Activated CD4-positive, alpha-beta T cell treated with anti-CD3 and anti-CD28 coated beads for 36 hours (primary cell): ENCODE measurements at regions of chr3 and their contacts with region 1.

Region 1: DNA sequence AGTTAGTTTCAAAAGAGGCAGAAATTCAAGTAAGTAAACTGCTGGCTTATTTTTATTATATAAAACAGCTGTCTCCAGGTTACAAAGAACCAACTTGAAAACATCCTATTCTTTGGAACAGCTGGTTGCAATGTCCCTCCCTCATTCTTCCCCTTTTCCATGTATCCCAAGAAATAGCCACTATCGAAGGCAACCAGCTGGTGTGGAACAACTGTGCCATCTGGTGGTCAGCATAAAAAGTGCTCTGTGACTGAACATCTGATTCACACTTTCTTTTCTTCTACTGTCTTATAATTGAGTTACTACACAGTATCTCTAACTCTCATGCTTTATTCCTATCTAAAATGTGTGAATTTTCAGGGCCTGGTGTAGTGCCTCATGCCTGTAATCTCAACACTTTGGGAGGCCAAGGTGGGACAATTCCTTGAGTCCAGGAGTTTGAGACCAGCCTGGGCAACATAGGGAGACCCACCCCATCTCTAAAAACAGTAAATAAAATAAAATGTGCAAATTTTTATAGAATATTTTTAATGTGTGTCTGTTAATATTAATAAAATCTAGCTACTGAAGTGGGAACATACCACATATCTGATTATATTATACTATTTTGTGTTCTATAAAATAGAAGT is 9.6 kb downstream of the OSBPL11 start:
- DNase-seq: peak; percentile 70
- ATAC-seq: peak; percentile 54
- H3K4me3 Mint-ChIP-seq: no peak overlapping the region
- H3K27ac Mint-ChIP-seq: no peak overlapping the region
- H3K4me1 Mint-ChIP-seq: peaks cover 18% of the 10 kb centered on the region
- H3K27me3 Mint-ChIP-seq: no peaks in the 10 kb centered on the region

Region 2: GRCh38 chr3:124761250-124761796 is 824.4 kb before region 1 on chr3:
- CTCF ChIA-PET with region 1: interaction called, 12 read pairs
- POLR2A ChIA-PET with region 1: no interaction called
- intact Hi-C with region 1: loop called in 1 of 2 experiments (anchors 5 kb)
- DNase-seq: peak; percentile 88
- ATAC-seq: peak; percentile 90
- H3K4me3 Mint-ChIP-seq: peak overlapping the region; percentile 29
- H3K27ac Mint-ChIP-seq: no peak overlapping the region
- H3K4me1 Mint-ChIP-seq: peaks cover 9% of the 10 kb centered on the region
- H3K27me3 Mint-ChIP-seq: no peaks in the 10 kb centered on the region

Region 3: DNA sequence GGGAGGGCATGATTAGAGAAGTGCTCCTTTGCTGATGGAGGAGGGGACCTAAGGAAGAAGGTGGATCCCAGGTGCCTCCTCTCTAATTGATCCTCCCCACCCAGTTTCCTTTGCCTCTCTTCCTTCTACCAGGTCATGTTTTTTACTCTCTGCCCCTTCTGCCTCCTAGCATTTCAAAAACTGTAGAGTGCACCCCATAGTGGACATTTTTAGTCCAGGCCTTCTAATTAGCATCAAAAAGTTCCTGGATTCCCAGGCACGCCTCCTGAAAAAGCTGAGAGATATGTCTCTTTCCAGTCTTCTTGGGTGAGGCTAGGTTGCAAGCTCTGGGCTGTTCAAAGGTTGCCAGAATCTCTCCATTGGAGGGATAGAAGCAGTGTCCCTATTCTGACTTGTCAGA is 679.9 kb before region 1 on chr3:
- CTCF ChIA-PET with region 1: no interaction called
- POLR2A ChIA-PET with region 1: no interaction called
- intact Hi-C with region 1: no loop called
- DNase-seq: no peak
- ATAC-seq: no peak
- H3K4me3 Mint-ChIP-seq: no peak overlapping the region
- H3K27ac Mint-ChIP-seq: no peak overlapping the region
- H3K4me1 Mint-ChIP-seq: peaks cover 2% of the 10 kb centered on the region
- H3K27me3 Mint-ChIP-seq: peaks cover 2% of the 10 kb centered on the region

Region 4: DNA sequence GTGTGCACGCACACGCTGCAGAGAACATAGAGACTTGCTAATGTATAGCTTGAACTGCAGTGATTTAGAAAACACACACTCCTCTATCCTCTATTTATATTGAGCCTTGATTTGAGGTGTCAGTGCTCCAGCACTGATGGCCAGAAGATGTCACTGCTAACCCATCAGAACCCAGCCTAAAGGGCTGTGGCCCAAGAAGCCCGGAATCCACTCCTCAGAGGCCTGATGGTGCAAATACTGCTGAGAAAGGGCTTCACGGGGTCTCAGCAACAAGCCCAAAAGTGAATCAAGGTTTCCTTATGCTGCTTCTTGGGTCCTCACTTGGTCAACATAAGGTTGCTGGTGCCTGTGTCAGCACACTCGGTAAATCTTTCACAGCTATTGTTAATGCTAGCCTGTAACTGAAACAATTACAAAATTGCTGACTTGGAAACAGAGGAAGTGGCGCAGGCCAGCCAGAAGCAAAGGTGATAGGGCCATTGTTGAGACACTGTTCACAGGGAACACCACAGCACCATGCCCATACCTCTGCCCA is 590.2 kb before region 1 on chr3:
- CTCF ChIA-PET with region 1: interaction called, 4 read pairs
- POLR2A ChIA-PET with region 1: no interaction called
- intact Hi-C with region 1: loop called (anchors 1 to 10 kb)
- DNase-seq: peak; percentile 63
- ATAC-seq: peak; percentile 92
- H3K4me3 Mint-ChIP-seq: no peak overlapping the region
- H3K27ac Mint-ChIP-seq: no peak overlapping the region
- H3K4me1 Mint-ChIP-seq: no peaks in the 10 kb centered on the region
- H3K27me3 Mint-ChIP-seq: no peaks in the 10 kb centered on the region

Region 5: GRCh38 chr3:125212509-125213244 is 373.0 kb before region 1 on chr3 and contains the start of gene SLC12A8:
- CTCF ChIA-PET with region 1: no interaction called
- POLR2A ChIA-PET with region 1: no interaction called
- intact Hi-C with region 1: loop called in 1 of 2 experiments (anchors 5 kb)
- DNase-seq: no peak
- ATAC-seq: no peak
- H3K4me3 Mint-ChIP-seq: peak within 1 kb of the TSS; percentile 13
- H3K27ac Mint-ChIP-seq: no peak within 1 kb of the TSS
- H3K4me1 Mint-ChIP-seq: peaks cover 9% of the 10 kb centered on the region
- H3K27me3 Mint-ChIP-seq: peaks cover 49% of the 10 kb centered on the region
- total RNA-seq, gene SLC12A8: 0.26 to 0.39 TPM

Region 6: DNA sequence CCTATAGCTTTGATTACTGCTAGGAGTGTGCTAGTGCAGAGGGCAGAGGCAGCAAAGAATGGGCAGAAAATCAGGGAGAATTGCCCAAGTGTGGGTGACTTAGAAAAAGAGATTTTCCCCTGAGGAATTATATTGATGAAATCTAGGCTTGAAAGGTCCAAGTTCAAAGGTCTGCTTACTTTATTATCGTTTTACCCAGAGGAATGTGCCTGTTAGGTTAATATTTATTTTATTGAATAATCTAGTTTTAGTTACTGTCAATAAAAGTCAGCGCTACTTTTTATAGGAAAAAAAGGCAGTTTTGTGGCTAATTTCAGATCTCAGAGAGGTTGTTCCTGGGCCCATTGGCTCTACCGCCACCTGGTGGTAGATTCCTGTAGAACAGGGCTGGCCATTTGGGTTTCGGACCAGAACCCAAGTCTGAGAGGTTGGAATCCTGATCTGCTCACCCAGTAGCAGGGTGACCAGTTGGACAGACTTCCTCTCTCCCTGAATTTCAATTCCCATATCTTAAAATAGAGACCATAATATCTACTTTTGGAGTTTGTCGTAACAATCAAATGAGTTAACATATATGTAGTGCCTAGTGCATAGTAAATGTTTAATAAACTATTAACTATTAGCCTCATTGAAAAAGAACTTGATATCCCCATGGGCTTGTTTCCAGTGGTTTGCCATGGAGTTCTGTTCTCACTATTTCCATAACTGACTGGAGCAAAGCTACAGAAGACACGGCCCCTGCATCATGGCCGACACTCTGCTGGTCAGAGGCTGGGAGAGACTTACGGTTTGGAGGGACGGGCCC is 147.9 kb before region 1 on chr3:
- CTCF ChIA-PET with region 1: interaction called, 8 read pairs
- POLR2A ChIA-PET with region 1: interaction called, 3 read pairs
- intact Hi-C with region 1: loop called (anchors 5 to 10 kb)
- DNase-seq: peak; percentile 76
- ATAC-seq: peak; percentile 60
- H3K4me3 Mint-ChIP-seq: no peak overlapping the region
- H3K27ac Mint-ChIP-seq: no peak overlapping the region
- H3K4me1 Mint-ChIP-seq: peaks cover 3% of the 10 kb centered on the region
- H3K27me3 Mint-ChIP-seq: no peaks in the 10 kb centered on the region

Region 7: GRCh38 chr3:125462722-125463299 is 122.9 kb before region 1 on chr3:
- CTCF ChIA-PET with region 1: no interaction called
- POLR2A ChIA-PET with region 1: no interaction called
- intact Hi-C with region 1: no loop called
- DNase-seq: no peak
- ATAC-seq: no peak
- H3K4me3 Mint-ChIP-seq: no peak overlapping the region
- H3K27ac Mint-ChIP-seq: no peak overlapping the region
- H3K4me1 Mint-ChIP-seq: no peaks in the 10 kb centered on the region
- H3K27me3 Mint-ChIP-seq: no peaks in the 10 kb centered on the region

Region 8: GRCh38 chr3:125573216-125573615 is 12.5 kb before region 1 on chr3:
- CTCF ChIA-PET with region 1: interaction called, 12 read pairs
- POLR2A ChIA-PET with region 1: no interaction called
- intact Hi-C with region 1: no loop called
- DNase-seq: no peak
- ATAC-seq: no peak
- H3K4me3 Mint-ChIP-seq: no peak overlapping the region
- H3K27ac Mint-ChIP-seq: no peak overlapping the region
- H3K4me1 Mint-ChIP-seq: peaks cover 2% of the 10 kb centered on the region
- H3K27me3 Mint-ChIP-seq: no peaks in the 10 kb centered on the region